ENCODE measurements at regions of chr3 and their contacts with region 1.

Region 1: DNA sequence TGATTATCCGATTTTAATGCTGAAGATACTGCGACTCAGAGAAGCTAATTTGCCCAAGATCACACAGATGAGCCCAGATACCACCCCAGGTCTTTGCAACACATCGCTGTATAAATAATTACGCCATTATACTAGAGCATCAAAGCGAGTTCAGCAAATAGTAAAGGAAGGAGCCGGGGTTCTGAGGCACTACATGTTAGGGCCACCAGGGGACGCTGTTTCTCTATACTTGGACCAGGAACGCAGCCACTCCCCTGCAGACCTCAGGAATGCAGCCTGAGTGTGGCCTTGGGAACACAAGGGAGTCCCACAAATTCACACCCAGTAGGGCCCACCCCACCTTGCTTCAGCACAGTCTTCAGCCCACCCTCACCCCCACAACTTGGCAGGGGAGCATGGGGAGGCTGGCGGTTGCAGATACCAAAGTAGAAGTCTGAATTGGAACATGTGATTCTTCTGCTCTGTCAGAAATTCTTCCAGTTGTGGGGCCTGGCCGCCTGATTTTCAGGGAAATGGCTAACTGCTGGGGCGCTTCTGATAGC is 57.8 kb upstream of the RYK start:
- DNase-seq: peak; percentile 63
- ATAC-seq: peak; percentile 71
- H3K4me3 ChIP-seq: peak overlapping the region; percentile 17 to 30; a peak in 1 of 4 replicates
- H3K27ac ChIP-seq: peak overlapping the region; percentile 32; the same call in 1 of the 2 replicates
- H3K4me1 ChIP-seq: peaks cover 25 to 39% of the 10 kb centered on the region in 2 experiments
- H3K27me3 ChIP-seq: no peaks in the 10 kb centered on the region
- CTCF ChIP-seq: peak in 2 of 3 experiments; percentile 98 to 99; a peak in 4 of 6 replicates
- POLR2A ChIP-seq: no peak
- RAD21 ChIP-seq: no peak

Region 2: DNA sequence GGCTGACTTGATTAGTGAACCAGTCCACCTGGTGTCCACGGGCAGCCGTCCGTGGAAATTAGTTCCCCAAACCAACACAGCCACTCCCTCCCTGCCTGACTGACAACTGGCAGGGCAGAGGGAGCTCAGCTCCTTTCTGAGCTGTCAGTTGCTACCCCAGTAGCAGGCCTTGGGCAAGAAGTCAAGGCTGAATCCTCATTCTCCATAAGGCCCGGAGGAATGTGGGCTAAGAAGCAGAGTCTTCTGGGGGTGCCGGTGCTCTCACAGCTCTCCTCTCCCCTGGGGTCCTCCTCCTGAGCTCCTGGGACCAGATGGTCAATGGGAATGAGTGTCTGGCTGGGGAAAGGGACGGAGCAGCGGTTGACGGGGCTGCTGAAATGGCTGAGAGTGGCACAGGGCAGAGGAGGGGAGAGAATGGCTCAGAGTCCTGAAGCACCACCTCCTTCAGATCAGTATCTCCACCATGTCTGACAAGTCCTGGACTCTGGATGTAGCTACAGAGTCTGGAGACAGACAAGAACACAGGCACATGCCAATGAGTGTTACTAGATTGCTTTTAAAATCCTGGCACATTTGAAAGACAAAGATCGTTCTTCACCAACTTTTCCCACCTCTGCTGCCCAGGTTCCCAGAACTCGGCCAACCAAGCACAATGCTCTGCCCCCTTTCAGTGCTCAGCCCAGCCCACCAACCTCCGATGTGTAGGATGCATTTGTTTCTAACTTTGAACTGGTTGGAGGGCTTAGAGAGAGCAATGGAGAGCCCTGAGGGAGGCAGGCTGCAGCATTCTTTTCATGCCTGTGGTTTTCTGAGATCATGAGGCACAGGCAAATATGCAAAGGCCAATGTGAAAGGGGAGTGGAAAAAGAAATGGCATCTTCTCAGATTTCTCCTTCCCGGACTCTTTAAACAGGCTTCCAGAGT is 49.1 kb after region 1 on chr3:
- CTCF ChIA-PET with region 1: no interaction called
- POLR2A ChIA-PET with region 1: no interaction called
- RAD21 ChIA-PET with region 1: no interaction called
- intact Hi-C with region 1: loop called (anchors 2 kb)
- DNase-seq: peak; percentile 52
- ATAC-seq: peak; percentile 85
- H3K4me3 ChIP-seq: peak overlapping the region in 1 of 2 experiments; percentile 12; a peak in 1 of 4 replicates
- H3K27ac ChIP-seq: peak overlapping the region; percentile 73
- H3K4me1 ChIP-seq: peaks cover 34 to 77% of the 10 kb centered on the region in 2 experiments
- H3K27me3 ChIP-seq: no peaks in the 10 kb centered on the region
- CTCF ChIP-seq: no peak
- POLR2A ChIP-seq: no peak
- RAD21 ChIP-seq: no peak

Region 3: GRCh38 chr3:134373994-134374790 is 65.8 kb after region 1 on chr3 and contains the start of gene AMOTL2:
- CTCF ChIA-PET with region 1: interaction called, 10 read pairs
- POLR2A ChIA-PET with region 1: interaction called, 6 read pairs
- RAD21 ChIA-PET with region 1: interaction called, 3 to 4 read pairs
- intact Hi-C with region 1: loop called (anchors 1 kb)
- DNase-seq: peak; percentile 87
- ATAC-seq: peak; percentile 71
- H3K4me3 ChIP-seq: peak within 1 kb of the TSS; percentile 57 to 92
- H3K27ac ChIP-seq: peak within 1 kb of the TSS; percentile 98
- H3K4me1 ChIP-seq: peaks cover 40 to 79% of the 10 kb centered on the region in 2 experiments
- H3K27me3 ChIP-seq: no peaks in the 10 kb centered on the region
- CTCF ChIP-seq: no peak
- POLR2A ChIP-seq: peak; percentile 88
- RAD21 ChIP-seq: no peak
- total RNA-seq, gene AMOTL2: 54.0 TPM

Region 4: GRCh38 chr3:134449277-134449676 is 140.9 kb after region 1 on chr3:
- CTCF ChIA-PET with region 1: interaction called, 3 read pairs
- POLR2A ChIA-PET with region 1: no interaction called
- RAD21 ChIA-PET with region 1: no interaction called
- intact Hi-C with region 1: loop called (anchors 1 kb)
- DNase-seq: no peak
- ATAC-seq: peak; percentile 85
- H3K4me3 ChIP-seq: no peak overlapping the region
- H3K27ac ChIP-seq: no peak overlapping the region
- H3K4me1 ChIP-seq: no peaks in the 10 kb centered on the region
- H3K27me3 ChIP-seq: no peaks in the 10 kb centered on the region
- CTCF ChIP-seq: peak; percentile 42 to 60 (median 52); a peak in 4 of 6 replicates
- POLR2A ChIP-seq: no peak
- RAD21 ChIP-seq: peak; percentile 76